Caco-2 (cell line): ENCODE measurements at regions of chr2 and their contacts with region 1.

Region 1: GRCh38 chr2:226466561-226466960 is 333.1 kb downstream of the IRS1 start:
- DNase-seq: peak in 1 of 2 experiments; percentile 20
- H3K4me3 ChIP-seq: no peak overlapping the region
- H3K4me3 Mint-ChIP-seq: no peak overlapping the region
- H3K27ac Mint-ChIP-seq: no peak overlapping the region
- H3K4me1 ChIP-seq: peaks cover 25% of the 10 kb centered on the region
- H3K4me1 Mint-ChIP-seq: no peaks in the 10 kb centered on the region
- H3K27me3 ChIP-seq: no peaks in the 10 kb centered on the region
- H3K27me3 Mint-ChIP-seq: no peaks in the 10 kb centered on the region
- CTCF ChIP-seq: no peak

Region 2: GRCh38 chr2:226378753-226379580 is 87.6 kb before region 1 on chr2:
- CTCF ChIA-PET with region 1: no interaction called
- POLR2A ChIA-PET with region 1: no interaction called
- intact Hi-C with region 1: no loop called
- DNase-seq: peak in 1 of 2 experiments; percentile 1
- H3K4me3 ChIP-seq: no peak overlapping the region
- H3K4me3 Mint-ChIP-seq: no peak overlapping the region
- H3K27ac Mint-ChIP-seq: no peak overlapping the region
- H3K4me1 ChIP-seq: no peaks in the 10 kb centered on the region
- H3K4me1 Mint-ChIP-seq: no peaks in the 10 kb centered on the region
- H3K27me3 ChIP-seq: no peaks in the 10 kb centered on the region
- H3K27me3 Mint-ChIP-seq: no peaks in the 10 kb centered on the region
- CTCF ChIP-seq: no peak

Region 3: DNA sequence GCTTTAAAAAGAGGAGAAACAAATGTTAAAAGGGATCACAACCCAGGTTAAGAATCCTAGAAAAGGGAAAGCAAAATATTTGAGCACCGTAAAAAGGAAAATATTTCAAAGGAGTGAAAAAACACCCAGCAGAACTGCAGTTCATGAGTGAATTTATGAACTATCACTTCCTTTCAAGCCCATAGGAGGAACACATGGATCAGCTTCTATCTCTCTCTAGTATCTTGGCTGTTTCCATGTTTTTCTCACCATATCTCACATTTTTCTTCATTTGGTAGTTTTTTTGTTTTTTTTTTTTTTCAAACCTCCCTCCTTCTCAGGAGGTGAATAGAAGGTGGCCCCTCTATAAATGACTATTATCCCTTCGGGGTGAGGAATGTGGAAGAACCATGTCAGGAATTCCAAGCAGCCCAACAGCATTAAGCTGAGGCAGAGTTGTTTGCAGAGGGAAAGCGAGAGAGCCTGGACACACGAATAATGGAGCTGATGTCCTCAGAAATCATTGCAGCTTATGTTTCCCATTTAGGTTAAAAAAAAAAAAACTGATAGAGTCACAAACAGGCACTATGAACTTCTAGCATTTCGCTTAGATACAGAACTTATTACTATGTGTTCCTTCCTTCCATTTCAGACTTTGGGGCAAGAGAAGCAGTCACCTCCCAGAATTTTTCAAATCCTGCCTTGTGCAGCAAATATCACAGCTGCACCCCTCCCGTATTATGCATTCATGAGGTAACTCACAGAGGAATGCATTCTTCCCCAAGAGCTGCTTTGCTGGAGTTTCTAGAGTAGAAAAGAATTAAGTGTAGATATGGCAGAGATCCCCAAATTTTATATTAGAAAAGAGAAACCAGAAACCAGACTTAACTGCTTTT is 17.4 kb after region 1 on chr2:
- CTCF ChIA-PET with region 1: interaction called, 4 read pairs
- POLR2A ChIA-PET with region 1: no interaction called
- intact Hi-C with region 1: loop called (anchors 2 kb)
- DNase-seq: peak; percentile 61 to 80
- H3K4me3 ChIP-seq: no peak overlapping the region
- H3K4me3 Mint-ChIP-seq: peak overlapping the region; percentile 63
- H3K27ac Mint-ChIP-seq: peak overlapping the region; percentile 96
- H3K4me1 ChIP-seq: peaks cover 56% of the 10 kb centered on the region
- H3K4me1 Mint-ChIP-seq: peaks cover 22% of the 10 kb centered on the region
- H3K27me3 ChIP-seq: no peaks in the 10 kb centered on the region
- H3K27me3 Mint-ChIP-seq: no peaks in the 10 kb centered on the region
- CTCF ChIP-seq: no peak

Region 4: GRCh38 chr2:226489775-226490541 is 23.4 kb after region 1 on chr2:
- CTCF ChIA-PET with region 1: no interaction called
- POLR2A ChIA-PET with region 1: no interaction called
- intact Hi-C with region 1: loop called (anchors 1 kb)
- DNase-seq: no peak
- H3K4me3 ChIP-seq: no peak overlapping the region
- H3K4me3 Mint-ChIP-seq: no peak overlapping the region
- H3K27ac Mint-ChIP-seq: no peak overlapping the region
- H3K4me1 ChIP-seq: peaks cover 15% of the 10 kb centered on the region
- H3K4me1 Mint-ChIP-seq: peaks cover 9% of the 10 kb centered on the region
- H3K27me3 ChIP-seq: no peaks in the 10 kb centered on the region
- H3K27me3 Mint-ChIP-seq: no peaks in the 10 kb centered on the region
- CTCF ChIP-seq: no peak

Region 5: DNA sequence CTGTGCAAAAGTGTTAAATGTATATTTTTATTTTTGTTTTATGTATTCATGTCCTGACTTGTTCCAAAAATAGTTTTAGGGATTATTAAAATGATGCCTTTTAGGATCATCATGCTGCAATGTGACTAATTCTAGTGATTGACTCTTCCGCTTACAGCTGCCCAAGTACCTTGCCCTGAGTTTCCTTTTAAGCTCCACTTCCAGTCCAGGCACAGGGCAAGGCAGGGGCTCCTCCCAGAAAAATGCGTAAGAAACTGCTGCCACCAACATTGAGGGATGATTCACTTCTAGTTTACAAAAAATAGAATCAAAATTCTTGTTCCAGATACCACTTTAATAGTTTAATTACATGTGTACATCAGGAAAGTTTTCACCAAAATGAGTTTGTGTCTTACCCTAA is 216.6 kb after region 1 on chr2:
- CTCF ChIA-PET with region 1: no interaction called
- POLR2A ChIA-PET with region 1: no interaction called
- intact Hi-C with region 1: no loop called
- DNase-seq: no peak
- H3K4me3 ChIP-seq: no peak overlapping the region
- H3K4me3 Mint-ChIP-seq: no peak overlapping the region
- H3K27ac Mint-ChIP-seq: no peak overlapping the region
- H3K4me1 ChIP-seq: peaks cover 15% of the 10 kb centered on the region
- H3K4me1 Mint-ChIP-seq: peaks cover 5% of the 10 kb centered on the region
- H3K27me3 ChIP-seq: no peaks in the 10 kb centered on the region
- H3K27me3 Mint-ChIP-seq: no peaks in the 10 kb centered on the region
- CTCF ChIP-seq: no peak